Naive thymus-derived CD4-positive, alpha-beta T cell (primary cell): ENCODE measurements at regions of chr5 and their contacts with region 1.

Region 1: DNA sequence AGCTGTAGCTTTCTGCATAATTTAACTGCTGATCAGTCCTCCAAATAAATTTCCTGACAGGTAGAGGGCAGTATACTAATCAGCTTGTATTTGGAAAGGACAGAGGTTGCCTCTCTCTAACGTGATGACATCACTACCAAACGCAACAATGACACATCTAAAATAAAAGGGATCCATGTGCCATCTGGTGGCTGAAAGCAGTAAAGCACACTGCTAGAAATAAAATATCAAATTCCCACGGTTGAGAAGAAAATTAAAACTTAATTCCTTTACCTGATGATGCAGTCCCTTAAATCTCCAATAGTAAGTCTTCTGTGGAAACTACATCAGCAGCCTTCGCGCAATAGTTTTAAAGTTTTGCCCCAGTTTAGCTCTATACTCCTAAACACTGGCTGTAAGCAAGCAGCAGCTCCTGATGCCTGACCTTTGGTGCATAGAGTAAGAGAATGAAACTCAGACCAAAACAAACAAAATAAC is 54.5 kb downstream of the DIAPH1 start:
- DNase-seq: peak; percentile 17 to 89 (median 80)
- ATAC-seq: peak; percentile 100
- H3K4me3 ChIP-seq: no peak overlapping the region
- H3K4me3 Mint-ChIP-seq: peak overlapping the region in 1 of 10 donors; percentile 8
- H3K27ac ChIP-seq: peak overlapping the region; percentile 43
- H3K27ac Mint-ChIP-seq: peak overlapping the region; percentile 41 to 93 (median 72)
- H3K4me1 ChIP-seq: peaks cover 0 to 8% of the 10 kb centered on the region in 2 donors
- H3K4me1 Mint-ChIP-seq: peaks cover 13 to 51% (median 38%) of the 10 kb centered on the region in 7 donors
- H3K27me3 ChIP-seq: no peaks in the 10 kb centered on the region
- H3K27me3 Mint-ChIP-seq: no peaks in the 10 kb centered on the region

Region 2: DNA sequence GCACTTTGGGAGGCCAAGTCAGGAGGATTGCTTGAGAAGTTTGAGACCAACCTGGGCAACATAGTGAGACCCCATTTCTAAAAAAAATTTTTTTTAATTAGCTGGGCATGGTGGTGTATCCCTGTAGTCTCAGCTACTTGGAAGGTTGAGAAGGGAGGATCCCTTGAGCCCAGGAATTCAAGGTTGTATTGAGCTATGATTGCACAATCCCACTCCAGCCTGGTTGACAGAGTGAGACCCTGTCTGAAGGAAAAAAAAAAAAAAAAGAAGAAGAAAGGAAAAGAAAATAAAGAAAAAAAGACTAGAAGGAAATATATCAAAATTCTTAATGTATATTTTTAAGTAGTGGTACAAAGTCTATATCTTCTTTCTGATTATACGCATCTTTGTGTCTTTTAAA is 541.9 kb before region 1 on chr5:
- CTCF ChIA-PET with region 1: no interaction called
- POLR2A ChIA-PET with region 1: no interaction called
- intact Hi-C with region 1: no loop called
- DNase-seq: no peak
- ATAC-seq: no peak
- H3K4me3 ChIP-seq: no peak overlapping the region
- H3K4me3 Mint-ChIP-seq: no peak overlapping the region
- H3K27ac ChIP-seq: no peak overlapping the region
- H3K27ac Mint-ChIP-seq: no peak overlapping the region
- H3K4me1 ChIP-seq: no peaks in the 10 kb centered on the region
- H3K4me1 Mint-ChIP-seq: no peaks in the 10 kb centered on the region
- H3K27me3 ChIP-seq: no peaks in the 10 kb centered on the region
- H3K27me3 Mint-ChIP-seq: peaks cover 0 to 10% (median 0%) of the 10 kb centered on the region in 5 donors

Region 3: DNA sequence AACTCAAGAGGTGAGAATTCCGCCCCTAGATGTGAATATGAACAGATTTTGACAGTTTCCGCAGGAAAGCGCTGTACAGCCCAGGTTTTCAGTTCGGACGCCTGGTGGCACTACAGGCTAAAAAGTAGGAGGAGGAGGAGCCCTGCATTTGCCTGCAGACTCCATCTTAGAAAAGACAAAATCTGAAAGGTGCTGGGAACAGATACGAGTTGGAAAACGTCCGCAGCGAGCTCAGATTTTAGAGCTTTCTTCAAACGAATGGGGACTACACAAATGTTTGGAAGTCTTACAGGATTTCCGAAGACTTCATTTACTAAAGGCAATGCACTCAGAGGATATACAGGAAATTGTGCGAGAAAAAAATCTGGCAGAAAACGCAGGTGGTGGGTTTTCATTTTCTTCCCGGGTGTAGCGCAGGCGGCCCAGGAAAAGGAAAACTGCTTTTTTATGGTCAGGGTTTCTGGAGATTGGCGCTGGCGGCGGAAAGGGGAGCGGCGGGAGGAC is 479.7 kb before region 1 on chr5:
- CTCF ChIA-PET with region 1: interaction called, 6 read pairs
- POLR2A ChIA-PET with region 1: no interaction called
- intact Hi-C with region 1: loop called (anchors 1 to 10 kb)
- DNase-seq: peak in 7 of 9 donors; percentile 17 to 55 (median 31)
- ATAC-seq: peak; percentile 82
- H3K4me3 ChIP-seq: peak overlapping the region; percentile 40
- H3K4me3 Mint-ChIP-seq: peak overlapping the region; percentile 77 to 95 (median 90)
- H3K27ac ChIP-seq: no peak overlapping the region
- H3K27ac Mint-ChIP-seq: peak overlapping the region in 6 of 9 donors; percentile 48 to 90 (median 80)
- H3K4me1 ChIP-seq: no peaks in the 10 kb centered on the region
- H3K4me1 Mint-ChIP-seq: peaks cover 0 to 13% (median 8%) of the 10 kb centered on the region in 7 donors
- H3K27me3 ChIP-seq: no peaks in the 10 kb centered on the region
- H3K27me3 Mint-ChIP-seq: peaks cover 6 to 64% (median 34%) of the 10 kb centered on the region in 5 donors

Region 4: GRCh38 chr5:141223112-141223783 is 341.0 kb before region 1 on chr5 and contains the start of gene PCDHB14:
- CTCF ChIA-PET with region 1: interaction called, 3 read pairs
- POLR2A ChIA-PET with region 1: no interaction called
- intact Hi-C with region 1: loop called in 1 of 2 experiments (anchors 1 kb)
- DNase-seq: peak in 1 of 9 donors; percentile 7
- ATAC-seq: no peak
- H3K4me3 ChIP-seq: no peak within 1 kb of the TSS
- H3K4me3 Mint-ChIP-seq: peak within 1 kb of the TSS in 5 of 10 donors; percentile 37 to 65 (median 52)
- H3K27ac ChIP-seq: no peak within 1 kb of the TSS
- H3K27ac Mint-ChIP-seq: no peak within 1 kb of the TSS
- H3K4me1 ChIP-seq: no peaks in the 10 kb centered on the region
- H3K4me1 Mint-ChIP-seq: peaks cover 0 to 9% (median 0%) of the 10 kb centered on the region in 7 donors
- H3K27me3 ChIP-seq: peaks cover 0 to 5% of the 10 kb centered on the region in 2 donors
- H3K27me3 Mint-ChIP-seq: peaks cover 2 to 83% (median 67%) of the 10 kb centered on the region in 5 donors
- total RNA-seq, gene PCDHB14: not detected

Region 5: DNA sequence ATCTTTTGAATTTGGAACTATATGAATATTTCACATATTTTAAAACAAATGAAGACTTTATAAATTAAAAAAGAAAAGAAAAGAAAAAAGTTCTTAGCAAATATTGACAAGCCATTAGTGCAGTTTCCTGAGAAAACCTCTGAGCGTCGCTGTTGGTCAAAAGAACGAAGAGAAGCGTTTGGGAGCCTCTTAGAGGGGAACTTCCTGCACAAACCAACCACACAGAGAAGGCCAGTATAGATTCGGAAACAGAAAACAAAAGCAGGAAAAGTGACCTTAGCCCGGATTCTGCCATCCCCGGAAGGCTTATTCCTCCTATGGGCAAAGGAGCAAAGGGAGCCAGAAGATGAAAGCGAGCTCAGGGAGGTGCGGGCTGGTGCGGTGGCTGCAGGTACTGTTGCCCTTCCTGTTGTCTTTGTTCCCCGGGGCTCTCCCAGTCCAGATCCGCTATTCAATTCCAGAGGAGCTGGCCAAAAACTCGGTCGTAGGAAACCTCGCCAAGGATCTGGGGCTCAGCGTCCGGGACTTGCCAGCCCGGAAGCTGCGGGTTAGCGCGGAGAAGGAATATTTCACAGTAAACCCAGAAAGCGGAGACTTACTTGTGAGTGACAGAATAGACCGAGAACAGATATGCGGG is 204.3 kb before region 1 on chr5 and contains the start of gene PCDHGB2:
- CTCF ChIA-PET with region 1: no interaction called
- POLR2A ChIA-PET with region 1: no interaction called
- intact Hi-C with region 1: loop called in 1 of 2 experiments (anchors 2 kb)
- DNase-seq: peak in 1 of 9 donors; percentile 22
- ATAC-seq: peak; percentile 54
- H3K4me3 ChIP-seq: peak within 1 kb of the TSS; percentile 43
- H3K4me3 Mint-ChIP-seq: peak within 1 kb of the TSS; percentile 33 to 87 (median 78)
- H3K27ac ChIP-seq: no peak within 1 kb of the TSS
- H3K27ac Mint-ChIP-seq: peak within 1 kb of the TSS in 3 of 9 donors; percentile 48 to 57 (median 56)
- H3K4me1 ChIP-seq: no peaks in the 10 kb centered on the region
- H3K4me1 Mint-ChIP-seq: peaks cover 0 to 6% (median 3%) of the 10 kb centered on the region in 7 donors
- H3K27me3 ChIP-seq: peaks cover 5 to 19% of the 10 kb centered on the region in 2 donors
- H3K27me3 Mint-ChIP-seq: peaks cover 37 to 90% (median 87%) of the 10 kb centered on the region in 5 donors
- total RNA-seq, gene PCDHGB2: 0.24 to 1.3 (median 0.36) TPM in 4 of 5 experiments, not detected in the other

Region 6: GRCh38 chr5:141412854-141413539 is 151.3 kb before region 1 on chr5 and contains the start of gene PCDHGA10:
- CTCF ChIA-PET with region 1: interaction called, 17 read pairs
- POLR2A ChIA-PET with region 1: interaction called, 5 read pairs
- intact Hi-C with region 1: loop called (anchors 1 kb)
- DNase-seq: peak in 7 of 9 donors; percentile 38 to 66 (median 52)
- ATAC-seq: peak; percentile 84
- H3K4me3 ChIP-seq: peak within 1 kb of the TSS; percentile 73
- H3K4me3 Mint-ChIP-seq: peak within 1 kb of the TSS; percentile 83 to 92 (median 87)
- H3K27ac ChIP-seq: no peak within 1 kb of the TSS
- H3K27ac Mint-ChIP-seq: peak within 1 kb of the TSS in 2 of 9 donors; percentile 54 to 56
- H3K4me1 ChIP-seq: peaks cover 0 to 5% of the 10 kb centered on the region in 2 donors
- H3K4me1 Mint-ChIP-seq: peaks cover 13 to 27% (median 19%) of the 10 kb centered on the region in 7 donors
- H3K27me3 ChIP-seq: peaks cover 23% of the 10 kb centered on the region in 2 donors
- H3K27me3 Mint-ChIP-seq: peaks cover 69 to 80% (median 75%) of the 10 kb centered on the region in 5 donors
- total RNA-seq, gene PCDHGA10: 0.11 to 0.39 (median 0.24) TPM

Region 7: GRCh38 chr5:141524604-141525597 is 39.4 kb before region 1 on chr5:
- CTCF ChIA-PET with region 1: interaction called, 10 read pairs
- POLR2A ChIA-PET with region 1: no interaction called
- intact Hi-C with region 1: loop called in 1 of 2 experiments (anchors 5 kb)
- DNase-seq: peak; percentile 18 to 64 (median 43)
- ATAC-seq: peak; percentile 88
- H3K4me3 ChIP-seq: no peak overlapping the region
- H3K4me3 Mint-ChIP-seq: peak overlapping the region in 1 of 10 donors; percentile 21
- H3K27ac ChIP-seq: no peak overlapping the region
- H3K27ac Mint-ChIP-seq: peak overlapping the region in 8 of 9 donors; percentile 19 to 80 (median 54)
- H3K4me1 ChIP-seq: peaks cover 0 to 6% of the 10 kb centered on the region in 2 donors
- H3K4me1 Mint-ChIP-seq: peaks cover 6 to 28% (median 16%) of the 10 kb centered on the region in 7 donors
- H3K27me3 ChIP-seq: no peaks in the 10 kb centered on the region
- H3K27me3 Mint-ChIP-seq: no peaks in the 10 kb centered on the region

Region 8: GRCh38 chr5:141618804-141619554 is 54.7 kb after region 1 on chr5 and contains the start of gene DIAPH1:
- CTCF ChIA-PET with region 1: interaction called, 8 read pairs
- POLR2A ChIA-PET with region 1: no interaction called
- intact Hi-C with region 1: loop called (anchors 1 kb)
- DNase-seq: peak; percentile 91 to 98 (median 96)
- ATAC-seq: peak; percentile 98
- H3K4me3 ChIP-seq: peak within 1 kb of the TSS; percentile 77
- H3K4me3 Mint-ChIP-seq: peak within 1 kb of the TSS; percentile 94 to 100 (median 100)
- H3K27ac ChIP-seq: peak within 1 kb of the TSS; percentile 97
- H3K27ac Mint-ChIP-seq: peak within 1 kb of the TSS; percentile 91 to 99 (median 95)
- H3K4me1 ChIP-seq: peaks cover 11 to 22% of the 10 kb centered on the region in 2 donors
- H3K4me1 Mint-ChIP-seq: peaks cover 44 to 61% (median 56%) of the 10 kb centered on the region in 7 donors
- H3K27me3 ChIP-seq: no peaks in the 10 kb centered on the region
- H3K27me3 Mint-ChIP-seq: no peaks in the 10 kb centered on the region
- total RNA-seq, gene DIAPH1: 163 to 278 (median 173) TPM